Activated T-helper 2 cell treated with anti-CD3 and anti-CD28 coated beads, Interferon-gamma antibody, Interleukin-2, Interleukin-4, amounts not matched to agents 10 μg/mL and 5 μg/mL and 100 μg/mL, durations not matched to agents 14 hours and 24 hours and 36 hours (primary cell): ENCODE measurements at regions of chr16 and their contacts with region 1.

Region 1: DNA sequence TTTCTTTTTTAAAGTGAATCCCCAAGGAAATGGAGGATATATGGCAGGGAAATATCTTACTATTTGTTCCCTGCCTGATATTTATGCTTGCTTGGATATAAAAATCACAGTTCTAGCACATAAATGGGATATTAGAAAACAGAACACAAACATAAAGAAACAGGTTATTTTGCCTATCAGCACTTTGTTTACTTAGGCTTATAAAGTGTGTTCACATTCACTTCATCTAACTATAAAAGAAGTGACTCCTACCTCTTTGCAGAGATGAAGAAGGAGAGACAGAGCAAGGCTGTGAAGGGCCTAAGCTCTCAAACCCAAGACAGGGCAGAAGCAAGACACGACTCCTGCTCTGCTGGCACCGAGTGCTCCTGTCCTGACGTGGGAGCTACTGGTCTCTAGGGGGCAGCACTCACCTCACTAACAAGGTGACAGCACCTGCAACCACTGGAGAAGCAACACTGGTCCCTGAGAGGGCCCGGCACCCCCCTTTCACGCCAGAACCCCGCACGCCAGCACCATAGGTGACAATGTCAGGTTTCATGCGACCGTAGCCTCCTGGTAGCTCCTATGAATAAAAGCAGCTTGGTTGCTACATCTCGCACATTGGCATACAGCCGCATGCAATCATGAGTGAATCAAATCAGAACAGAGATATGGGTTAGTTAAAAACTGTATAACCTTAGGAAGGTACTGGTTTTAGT is 32.0 kb downstream of the MBTPS1 start:
- DNase-seq: peak; percentile 63
- H3K4me3 Mint-ChIP-seq: no peak overlapping the region
- H3K27ac Mint-ChIP-seq: no peak overlapping the region
- H3K4me1 Mint-ChIP-seq: peaks cover 42% of the 10 kb centered on the region
- H3K27me3 Mint-ChIP-seq: no peaks in the 10 kb centered on the region

Region 2: DNA sequence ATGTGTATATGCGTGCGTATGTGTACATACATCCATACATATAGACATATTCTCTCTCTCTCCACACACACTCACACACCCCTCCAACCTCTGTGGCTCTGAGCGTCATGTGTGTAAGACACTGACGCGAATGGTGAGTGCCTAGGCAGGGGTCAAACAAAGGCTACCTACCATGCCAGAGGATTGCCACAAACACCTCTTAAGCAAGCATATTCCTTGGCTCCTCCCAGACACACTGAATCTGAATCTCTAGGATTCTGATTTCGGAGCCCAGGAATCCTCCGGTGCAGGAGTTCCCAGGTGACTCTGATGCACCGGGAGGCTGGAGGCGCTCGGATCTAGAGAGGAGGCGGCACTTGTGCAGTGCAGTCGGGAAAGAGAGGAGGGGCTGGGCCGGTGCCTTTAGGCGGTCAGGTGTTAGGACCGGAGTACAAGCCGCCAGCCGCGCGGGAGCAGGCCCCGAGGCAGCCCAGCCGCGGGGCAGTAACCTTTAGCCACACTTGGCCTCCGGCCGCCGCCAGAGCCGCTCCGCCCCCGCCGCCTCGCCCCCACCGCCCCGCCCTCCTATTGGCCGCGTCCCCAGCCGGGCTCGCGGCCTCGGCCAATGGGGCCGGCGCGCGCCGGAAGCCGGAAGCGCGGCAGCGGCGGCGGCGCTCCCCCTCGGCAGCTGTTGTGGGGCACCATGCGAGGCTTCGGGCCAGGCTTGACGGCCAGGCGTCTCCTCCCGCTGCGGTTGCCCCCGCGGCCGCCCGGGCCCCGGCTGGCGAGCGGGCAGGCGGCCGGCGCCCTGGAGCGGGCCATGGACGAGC is 186.1 kb before region 1 on chr16 and contains the start of gene MLYCD:
- intact Hi-C with region 1: no loop called
- DNase-seq: peak; percentile 71
- H3K4me3 Mint-ChIP-seq: peak within 1 kb of the TSS; percentile 97
- H3K27ac Mint-ChIP-seq: peak within 1 kb of the TSS; percentile 75
- H3K4me1 Mint-ChIP-seq: peaks cover 22% of the 10 kb centered on the region
- H3K27me3 Mint-ChIP-seq: peaks cover 13% of the 10 kb centered on the region
- total RNA-seq, gene MLYCD: 6.1 TPM in 2 replicates

Region 3: GRCh38 chr16:84116720-84117493 is 32.2 kb after region 1 on chr16 and contains the start of gene MBTPS1:
- intact Hi-C with region 1: loop called (anchors 2 kb)
- DNase-seq: peak; percentile 98
- H3K4me3 Mint-ChIP-seq: peak within 1 kb of the TSS; percentile 90
- H3K27ac Mint-ChIP-seq: peak within 1 kb of the TSS; percentile 90
- H3K4me1 Mint-ChIP-seq: peaks cover 14% of the 10 kb centered on the region
- H3K27me3 Mint-ChIP-seq: no peaks in the 10 kb centered on the region
- total RNA-seq, gene MBTPS1: 54.5 and 58.1 TPM in 2 replicates

Region 4: GRCh38 chr16:84138824-84139627 is 54.3 kb after region 1 on chr16:
- intact Hi-C with region 1: loop called (anchors 2 kb)
- DNase-seq: no peak
- H3K4me3 Mint-ChIP-seq: peak overlapping the region; percentile 71
- H3K27ac Mint-ChIP-seq: peak overlapping the region; percentile 89
- H3K4me1 Mint-ChIP-seq: peaks cover 45% of the 10 kb centered on the region
- H3K27me3 Mint-ChIP-seq: no peaks in the 10 kb centered on the region

Region 5: DNA sequence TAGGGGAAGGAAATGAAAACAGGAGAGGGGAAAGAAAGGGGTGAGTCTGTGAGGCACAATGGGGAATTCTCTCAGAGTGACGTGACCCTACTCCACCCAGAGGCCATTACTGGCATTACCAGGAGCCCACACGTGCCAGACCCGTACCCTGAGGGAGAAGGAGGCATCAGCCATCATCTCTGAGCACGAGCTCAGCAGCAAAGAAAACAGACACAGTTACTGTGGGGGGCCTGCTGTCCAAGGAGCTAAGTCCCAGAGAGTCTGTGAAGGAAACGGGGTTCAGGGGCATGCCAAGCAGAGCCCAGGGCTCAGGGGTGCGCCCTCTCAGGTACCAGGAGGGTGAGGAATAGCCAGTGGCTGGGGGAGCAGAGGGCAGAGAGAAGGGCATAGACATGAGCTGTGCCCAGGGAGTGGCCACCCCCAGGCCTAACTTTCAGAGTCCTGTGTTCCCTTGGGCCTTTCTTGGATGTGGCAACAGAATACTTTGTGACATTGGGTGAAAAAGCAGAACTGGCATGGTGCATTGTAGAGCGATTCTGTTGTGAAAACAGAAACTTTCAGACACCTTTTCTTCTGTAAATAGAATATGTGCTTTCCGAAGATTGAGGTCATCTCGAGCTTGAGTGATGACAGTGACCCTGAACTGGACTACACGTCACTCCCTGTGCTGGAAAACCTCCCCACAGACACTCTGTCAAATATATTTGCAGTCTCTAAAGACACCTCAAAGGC is 90.8 kb after region 1 on chr16:
- intact Hi-C with region 1: loop called (anchors 1 kb)
- DNase-seq: no peak
- H3K4me3 Mint-ChIP-seq: no peak overlapping the region
- H3K27ac Mint-ChIP-seq: no peak overlapping the region
- H3K4me1 Mint-ChIP-seq: peaks cover 12% of the 10 kb centered on the region
- H3K27me3 Mint-ChIP-seq: peaks cover 7% of the 10 kb centered on the region

Region 6: DNA sequence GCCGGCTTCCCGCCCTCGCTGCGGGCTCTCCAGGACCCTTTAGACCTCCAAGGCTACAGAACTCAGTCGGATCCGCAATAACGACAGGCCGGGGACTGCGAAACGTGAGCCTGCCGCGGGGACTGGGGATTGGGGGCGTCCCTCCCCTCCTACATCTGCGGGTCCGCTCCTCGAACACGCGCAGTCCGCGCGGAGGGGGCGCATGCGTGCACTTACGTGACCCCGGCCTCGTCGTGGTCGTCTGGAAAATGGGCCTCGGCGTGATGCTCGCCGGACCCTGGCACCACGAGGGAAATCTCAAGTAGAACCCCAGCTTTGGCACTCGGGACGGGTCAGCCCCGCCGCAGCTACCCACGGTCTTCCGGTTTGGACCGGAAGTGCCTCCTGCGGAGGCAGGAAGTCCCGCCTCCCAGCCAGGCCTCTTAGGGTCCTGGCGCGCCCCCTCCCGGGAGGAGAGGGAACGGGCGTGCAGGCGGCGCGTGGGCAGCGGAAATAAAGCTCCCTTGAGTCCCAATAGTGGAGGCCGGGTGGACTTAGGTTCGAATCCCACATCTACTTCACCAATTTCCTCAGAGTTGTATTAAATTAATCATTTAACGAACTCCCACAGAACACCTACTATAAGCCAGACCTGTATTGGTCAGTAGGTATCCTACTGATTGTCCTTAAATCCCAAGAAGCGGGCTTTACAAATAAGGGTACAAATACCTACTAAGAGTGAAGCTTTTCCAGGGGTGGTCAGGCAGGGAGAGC is 102.1 kb after region 1 on chr16 and contains the start of gene TAF1C:
- intact Hi-C with region 1: loop called (anchors 1 kb)
- DNase-seq: peak; percentile 83
- H3K4me3 Mint-ChIP-seq: peak within 1 kb of the TSS; percentile 93
- H3K27ac Mint-ChIP-seq: peak within 1 kb of the TSS; percentile 84
- H3K4me1 Mint-ChIP-seq: peaks cover 11% of the 10 kb centered on the region
- H3K27me3 Mint-ChIP-seq: no peaks in the 10 kb centered on the region
- total RNA-seq, gene TAF1C: 57.5 and 64.4 TPM in 2 replicates

Region 7: GRCh38 chr16:84504420-84505248 is 419.9 kb after region 1 on chr16 and contains the start of gene MEAK7:
- intact Hi-C with region 1: loop called (anchors 10 kb)
- DNase-seq: peak; percentile 96
- H3K4me3 Mint-ChIP-seq: peak within 1 kb of the TSS; percentile 88
- H3K27ac Mint-ChIP-seq: peak within 1 kb of the TSS; percentile 89
- H3K4me1 Mint-ChIP-seq: peaks cover 44% of the 10 kb centered on the region
- H3K27me3 Mint-ChIP-seq: no peaks in the 10 kb centered on the region
- total RNA-seq, gene MEAK7: 15.4 and 19.4 TPM in 2 replicates